PC-9 (cell line): ENCODE measurements at regions of chr11 and their contacts with region 1.

Region 1: DNA sequence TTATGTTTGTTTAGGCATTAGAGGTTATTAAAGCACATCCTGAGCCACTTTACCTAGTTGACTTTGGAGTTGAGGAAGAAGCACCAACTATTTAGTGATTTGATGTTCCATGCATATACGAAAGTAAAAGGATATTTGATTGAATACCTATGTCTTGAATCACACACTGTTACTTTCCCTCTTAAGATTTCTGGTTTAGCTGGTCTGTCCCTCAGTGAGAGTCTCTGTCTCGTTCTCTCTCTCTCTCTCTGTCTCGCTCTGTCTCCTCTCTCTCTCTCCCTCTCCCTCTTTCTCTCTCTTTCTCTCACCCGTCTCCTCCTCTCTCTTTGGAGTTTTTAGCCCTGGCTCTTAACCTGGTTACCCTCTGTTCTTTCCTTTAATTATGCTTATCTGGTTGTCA is 11.0 kb downstream of the CTNND1 start:
- DNase-seq: peak in 1 of 2 experiments; percentile 92
- H3K4me3 ChIP-seq: peak overlapping the region; percentile 40; the same call in 1 of the 2 replicates
- H3K27ac ChIP-seq: peak overlapping the region; percentile 86
- H3K4me1 ChIP-seq: peaks cover 89% of the 10 kb centered on the region
- H3K27me3 ChIP-seq: no peaks in the 10 kb centered on the region
- CTCF ChIP-seq: no peak

Region 2: GRCh38 chr11:57729479-57729878 is 43.1 kb before region 1 on chr11:
- CTCF ChIA-PET with region 1: no interaction called
- POLR2A ChIA-PET with region 1: no interaction called
- intact Hi-C with region 1: no loop called
- DNase-seq: no peak
- H3K4me3 ChIP-seq: no peak overlapping the region
- H3K27ac ChIP-seq: no peak overlapping the region
- H3K4me1 ChIP-seq: peaks cover 30% of the 10 kb centered on the region
- H3K27me3 ChIP-seq: no peaks in the 10 kb centered on the region
- CTCF ChIP-seq: no peak

Region 3: DNA sequence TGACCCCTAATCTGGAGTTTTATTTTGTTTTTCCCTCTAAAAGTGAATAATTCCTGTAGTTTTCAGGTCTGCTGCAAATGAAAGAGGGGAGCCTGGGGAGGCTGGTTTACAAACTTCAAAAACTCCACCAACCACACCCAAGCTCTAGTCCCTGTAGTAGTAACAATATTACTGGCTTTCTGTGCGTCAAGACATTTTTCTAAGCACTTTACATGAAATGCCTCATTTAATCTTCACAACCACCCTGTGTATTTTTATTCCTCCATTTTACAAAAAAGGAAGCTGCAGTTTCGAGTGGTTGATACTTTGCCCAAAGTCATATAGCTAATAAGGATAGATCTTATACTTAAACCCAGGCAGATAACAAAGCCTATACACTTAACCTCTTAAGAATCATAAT is 12.5 kb after region 1 on chr11:
- CTCF ChIA-PET with region 1: no interaction called
- POLR2A ChIA-PET with region 1: interaction called, 10 read pairs
- intact Hi-C with region 1: no loop called
- DNase-seq: no peak
- H3K4me3 ChIP-seq: no peak overlapping the region
- H3K27ac ChIP-seq: peak overlapping the region; percentile 14; the same call in 1 of the 2 replicates
- H3K4me1 ChIP-seq: peaks cover 61% of the 10 kb centered on the region
- H3K27me3 ChIP-seq: no peaks in the 10 kb centered on the region
- CTCF ChIP-seq: no peak